H1 (cell line): ENCODE measurements at regions of chr3 and their contacts with region 1.

Region 1: DNA sequence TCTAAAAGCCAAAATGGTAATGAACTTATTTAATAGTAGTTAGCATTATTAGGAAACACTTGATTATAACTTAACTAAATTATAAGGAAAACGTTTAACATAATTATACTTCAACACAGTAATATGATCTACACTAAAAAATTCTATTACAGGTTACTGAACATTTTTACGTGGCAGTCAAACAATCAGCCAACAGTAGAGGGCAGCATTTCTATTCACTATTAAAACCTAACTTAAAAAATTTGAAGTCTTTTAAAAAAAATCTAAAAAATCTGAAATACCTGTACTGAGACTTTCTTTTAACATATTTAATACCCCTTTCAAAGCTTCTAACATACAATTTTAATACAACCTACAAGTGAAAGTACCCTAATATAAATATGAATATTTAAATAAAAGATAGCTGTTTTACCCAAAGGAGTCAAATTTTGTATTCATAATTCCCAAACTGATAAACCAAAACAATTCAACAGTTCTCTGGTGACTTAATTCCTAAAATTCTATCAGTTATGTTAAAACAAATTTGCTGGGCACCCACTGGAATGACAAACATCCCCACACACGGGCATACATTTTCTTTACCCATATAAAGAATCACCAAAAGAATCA is 41.5 kb downstream of the DLG1 start:
- DNase-seq: no peak
- H3K4me3 ChIP-seq: no peak overlapping the region
- H3K27ac ChIP-seq: no peak overlapping the region
- H3K4me1 ChIP-seq: peaks cover 0 to 2% (median 0%) of the 10 kb centered on the region in 4 experiments; a peak in 1 of 7 replicates
- H3K27me3 ChIP-seq: no peaks in the 10 kb centered on the region
- CTCF ChIP-seq: peak in 2 of 3 experiments; percentile 16 to 29; a peak in 2 of 4 replicates
- EP300 ChIP-seq: no peak
- POLR2A ChIP-seq: no peak
- RAD21 ChIP-seq: peak in 1 of 2 experiments; percentile 49; a peak in 3 of 4 replicates

Region 2: GRCh38 chr3:197010556-197011351 is 246.2 kb before region 1 on chr3:
- CTCF ChIA-PET with region 1: no interaction called
- POLR2A ChIA-PET with region 1: no interaction called
- DNase-seq: no peak
- H3K4me3 ChIP-seq: no peak overlapping the region
- H3K27ac ChIP-seq: no peak overlapping the region
- H3K4me1 ChIP-seq: peaks cover 0 to 3% (median 0%) of the 10 kb centered on the region in 4 experiments; a peak in 1 of 7 replicates
- H3K27me3 ChIP-seq: no peaks in the 10 kb centered on the region
- CTCF ChIP-seq: no peak
- EP300 ChIP-seq: no peak
- POLR2A ChIP-seq: no peak
- RAD21 ChIP-seq: no peak

Region 3: GRCh38 chr3:197224034-197224444 is 32.9 kb before region 1 on chr3:
- CTCF ChIA-PET with region 1: interaction called, 19 read pairs
- POLR2A ChIA-PET with region 1: no interaction called
- DNase-seq: no peak
- H3K4me3 ChIP-seq: no peak overlapping the region
- H3K27ac ChIP-seq: no peak overlapping the region
- H3K4me1 ChIP-seq: peaks cover 0 to 8% (median 3%) of the 10 kb centered on the region in 4 experiments; a peak in 4 of 7 replicates
- H3K27me3 ChIP-seq: no peaks in the 10 kb centered on the region
- CTCF ChIP-seq: peak in 2 of 3 experiments; percentile 48 to 59; a peak in 3 of 4 replicates
- EP300 ChIP-seq: no peak
- POLR2A ChIP-seq: no peak
- RAD21 ChIP-seq: peak; percentile 71 to 72

Region 4: DNA sequence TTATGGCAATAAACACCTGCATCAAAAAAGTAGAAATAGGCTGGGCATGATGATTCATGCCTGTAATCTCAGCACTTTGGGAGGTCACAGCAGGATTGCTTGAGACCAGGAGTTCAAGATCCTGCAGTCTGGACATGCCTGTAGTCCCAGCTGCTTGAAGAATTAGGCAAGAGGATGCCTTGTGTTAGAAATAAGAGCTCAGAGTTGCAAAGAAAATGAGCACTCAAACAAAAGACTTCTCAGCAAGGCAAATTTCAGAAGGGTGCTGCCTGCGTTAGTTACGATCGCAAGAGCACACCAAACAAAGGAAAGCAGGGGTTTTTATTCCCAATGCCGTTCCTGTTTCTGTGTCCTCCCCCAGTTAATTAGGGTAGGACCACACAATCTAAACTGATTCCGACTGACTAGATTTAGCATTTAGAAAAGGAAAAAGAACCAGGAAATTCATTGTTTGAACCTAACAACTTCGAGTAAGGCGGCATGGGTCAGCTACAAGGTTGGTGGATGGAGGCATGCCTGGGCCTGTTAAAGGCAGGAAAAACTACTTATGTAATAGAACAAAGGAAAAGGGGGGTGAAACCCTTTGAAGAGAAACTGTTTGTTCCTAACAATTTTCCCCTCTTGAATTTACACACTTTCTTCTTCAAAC is 14.0 kb before region 1 on chr3:
- CTCF ChIA-PET with region 1: interaction called, 52 read pairs
- POLR2A ChIA-PET with region 1: interaction called, 4 read pairs
- DNase-seq: no peak
- H3K4me3 ChIP-seq: peak overlapping the region in 1 of 4 experiments; percentile 0; a peak in 1 of 8 replicates
- H3K27ac ChIP-seq: peak overlapping the region; percentile 82
- H3K4me1 ChIP-seq: peaks cover 1 to 22% (median 8%) of the 10 kb centered on the region in 4 experiments; a peak in 4 of 7 replicates
- H3K27me3 ChIP-seq: no peaks in the 10 kb centered on the region
- CTCF ChIP-seq: no peak
- EP300 ChIP-seq: no peak
- POLR2A ChIP-seq: no peak
- RAD21 ChIP-seq: no peak

Region 5: GRCh38 chr3:197283045-197283444 is 26.1 kb after region 1 on chr3:
- CTCF ChIA-PET with region 1: interaction called, 12 read pairs
- POLR2A ChIA-PET with region 1: interaction called, 4 read pairs
- DNase-seq: no peak
- H3K4me3 ChIP-seq: no peak overlapping the region
- H3K27ac ChIP-seq: no peak overlapping the region
- H3K4me1 ChIP-seq: no peaks in the 10 kb centered on the region
- H3K27me3 ChIP-seq: no peaks in the 10 kb centered on the region
- CTCF ChIP-seq: no peak
- EP300 ChIP-seq: no peak
- POLR2A ChIP-seq: no peak
- RAD21 ChIP-seq: no peak

Region 6: GRCh38 chr3:197456261-197457091 is 199.5 kb after region 1 on chr3:
- CTCF ChIA-PET with region 1: interaction called, 10 read pairs
- POLR2A ChIA-PET with region 1: no interaction called
- DNase-seq: peak; percentile 34 to 80
- H3K4me3 ChIP-seq: peak overlapping the region; percentile 54 to 75 (median 64)
- H3K27ac ChIP-seq: no peak overlapping the region; the same call in 1 of the 2 replicates
- H3K4me1 ChIP-seq: peaks cover 0 to 9% (median 1%) of the 10 kb centered on the region in 4 experiments; a peak in 3 of 7 replicates
- H3K27me3 ChIP-seq: peaks cover 0 to 11% (median 8%) of the 10 kb centered on the region in 4 experiments; a peak in 5 of 7 replicates
- CTCF ChIP-seq: no peak
- EP300 ChIP-seq: no peak
- POLR2A ChIP-seq: no peak; a peak in 1 of 3 replicates
- RAD21 ChIP-seq: peak in 1 of 2 experiments; percentile 18; a peak in 1 of 4 replicates

Region 7: DNA sequence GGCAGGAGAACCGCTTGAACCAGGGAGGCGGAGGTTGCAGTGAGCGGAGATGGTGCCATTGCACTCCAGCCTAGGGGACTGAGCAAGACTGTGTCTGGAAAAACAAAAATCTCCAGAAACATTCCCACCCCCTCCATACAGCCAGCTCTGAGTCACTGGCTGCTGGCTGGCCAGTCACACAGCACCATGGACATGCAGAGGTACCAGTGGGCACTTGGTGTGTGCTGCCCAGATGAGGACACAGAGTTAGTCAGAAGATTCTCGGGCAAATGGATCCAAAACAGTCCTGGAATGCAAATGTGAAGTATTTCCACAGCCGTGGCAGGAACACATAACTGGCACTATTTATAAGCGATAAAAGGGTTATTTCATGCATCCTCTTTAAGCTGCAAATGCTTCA is 254.2 kb after region 1 on chr3:
- CTCF ChIA-PET with region 1: interaction called, 15 read pairs
- POLR2A ChIA-PET with region 1: no interaction called
- DNase-seq: no peak
- H3K4me3 ChIP-seq: no peak overlapping the region
- H3K27ac ChIP-seq: no peak overlapping the region
- H3K4me1 ChIP-seq: peaks cover 0 to 18% (median 5%) of the 10 kb centered on the region in 4 experiments; a peak in 5 of 7 replicates
- H3K27me3 ChIP-seq: peaks cover 0 to 6% (median 2%) of the 10 kb centered on the region in 4 experiments; a peak in 2 of 7 replicates
- CTCF ChIP-seq: no peak
- EP300 ChIP-seq: no peak
- POLR2A ChIP-seq: no peak
- RAD21 ChIP-seq: no peak